SK-N-SH (cell line): ENCODE measurements at regions of chr6 and their contacts with region 1.

Region 1: DNA sequence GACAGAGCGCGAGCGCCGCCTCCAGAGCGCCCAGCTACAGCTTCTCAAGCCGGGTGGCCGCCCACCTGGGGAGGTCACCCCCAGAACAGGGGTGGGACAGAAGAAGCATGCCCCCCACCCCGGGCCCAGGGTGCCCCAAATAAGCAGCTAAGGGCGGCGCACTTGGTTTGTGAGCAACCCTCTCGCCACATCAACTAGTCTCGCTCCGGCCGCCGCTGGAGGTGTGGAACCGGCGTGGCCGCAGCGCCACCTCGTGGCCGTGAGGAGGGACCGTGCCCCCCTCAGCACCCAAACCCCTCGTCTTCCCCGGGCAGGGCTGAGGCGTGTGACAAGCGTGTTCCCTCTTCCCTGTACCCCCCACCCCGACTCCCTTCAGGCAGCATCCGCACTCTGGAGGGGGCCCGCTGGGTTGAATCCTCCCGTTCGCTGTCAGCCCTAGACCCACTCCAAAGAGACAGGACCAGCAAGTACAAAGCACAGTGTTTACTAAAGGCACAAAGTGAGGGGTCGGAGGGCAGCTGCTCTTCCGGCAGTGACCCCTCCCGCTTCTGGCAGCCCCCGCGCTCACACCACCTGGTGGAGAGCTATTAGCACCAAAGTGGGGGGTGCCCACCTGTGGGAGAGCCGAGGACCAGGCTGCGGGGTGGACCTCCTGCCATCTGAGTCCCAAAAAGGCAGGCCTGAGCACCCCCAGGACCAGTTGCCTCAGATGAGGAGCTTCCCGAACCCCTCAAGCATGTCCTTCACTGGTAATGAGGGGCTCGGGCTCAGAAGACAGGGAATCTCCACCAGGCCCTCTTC is 45.4 kb downstream of the MDFI start:
- DNase-seq: peak; percentile 96
- H3K4me3 ChIP-seq: peak overlapping the region in 1 of 2 experiments; percentile 35; a peak in 1 of 4 replicates
- H3K27ac ChIP-seq: no peak overlapping the region
- H3K4me1 ChIP-seq: peaks cover 11 to 14% of the 10 kb centered on the region in 2 experiments; a peak in 3 of 4 replicates
- H3K27me3 ChIP-seq: no peaks in the 10 kb centered on the region
- CTCF ChIP-seq: peak; percentile 89
- EP300 ChIP-seq: no peak
- RAD21 ChIP-seq: peak; percentile 91

Region 2: GRCh38 chr6:41424370-41425058 is 259.2 kb before region 1 on chr6:
- CTCF ChIA-PET with region 1: interaction called, 30 read pairs
- POLR2A ChIA-PET with region 1: no interaction called
- DNase-seq: peak; percentile 84
- H3K4me3 ChIP-seq: no peak overlapping the region
- H3K27ac ChIP-seq: no peak overlapping the region
- H3K4me1 ChIP-seq: peaks cover 0 to 17% of the 10 kb centered on the region in 2 experiments; a peak in 1 of 4 replicates
- H3K27me3 ChIP-seq: peaks cover 48% of the 10 kb centered on the region
- CTCF ChIP-seq: peak; percentile 85
- EP300 ChIP-seq: no peak
- RAD21 ChIP-seq: peak; percentile 76

Region 3: GRCh38 chr6:41581381-41581991 is 102.2 kb before region 1 on chr6:
- CTCF ChIA-PET with region 1: interaction called, 32 read pairs
- POLR2A ChIA-PET with region 1: no interaction called
- DNase-seq: peak; percentile 63
- H3K4me3 ChIP-seq: 0 out of 4 replicates have a peak overlapping the region, but pooled peaks of 1 of the 2 experiments have one; percentile 1
- H3K27ac ChIP-seq: peak overlapping the region; percentile 60 to 93
- H3K4me1 ChIP-seq: peaks cover 30 to 49% of the 10 kb centered on the region in 2 experiments; a peak in 3 of 4 replicates
- H3K27me3 ChIP-seq: no peaks in the 10 kb centered on the region
- CTCF ChIP-seq: no peak
- EP300 ChIP-seq: peak in 1 of 2 experiments; percentile 61; a peak in 1 of 4 replicates
- RAD21 ChIP-seq: no peak

Region 4: GRCh38 chr6:41625442-41625841 is 58.3 kb before region 1 on chr6:
- CTCF ChIA-PET with region 1: interaction called, 13 read pairs
- POLR2A ChIA-PET with region 1: no interaction called
- DNase-seq: no peak
- H3K4me3 ChIP-seq: no peak overlapping the region
- H3K27ac ChIP-seq: no peak overlapping the region
- H3K4me1 ChIP-seq: peaks cover 0 to 3% of the 10 kb centered on the region in 2 experiments; a peak in 2 of 4 replicates
- H3K27me3 ChIP-seq: no peaks in the 10 kb centered on the region
- CTCF ChIP-seq: no peak
- EP300 ChIP-seq: no peak
- RAD21 ChIP-seq: no peak

Region 5: DNA sequence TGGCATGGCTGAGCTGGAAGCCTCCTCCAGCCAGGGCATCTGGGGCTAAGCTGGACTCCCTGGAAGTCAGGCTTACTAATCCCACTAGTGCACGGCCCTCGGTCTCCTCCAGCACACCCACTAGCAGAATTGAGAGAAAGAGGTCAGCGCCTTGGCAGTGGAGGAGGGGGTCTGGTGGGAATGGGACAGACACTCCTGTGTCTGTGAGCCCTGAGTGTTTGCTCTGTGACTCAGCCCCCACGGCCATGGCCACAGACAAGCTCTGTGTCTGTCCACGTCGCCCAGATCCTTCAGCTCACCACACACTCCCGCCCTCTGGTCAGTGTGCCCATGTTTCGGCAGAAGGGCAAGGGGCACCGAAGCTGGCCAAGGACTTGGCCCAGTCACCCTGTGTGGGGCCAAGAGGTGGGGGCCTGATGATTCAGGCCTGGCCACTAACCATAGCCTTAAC is 36.6 kb before region 1 on chr6:
- CTCF ChIA-PET with region 1: interaction called, 18 read pairs
- POLR2A ChIA-PET with region 1: no interaction called
- DNase-seq: no peak
- H3K4me3 ChIP-seq: no peak overlapping the region
- H3K27ac ChIP-seq: no peak overlapping the region
- H3K4me1 ChIP-seq: peaks cover 4 to 15% of the 10 kb centered on the region in 2 experiments; a peak in 2 of 4 replicates
- H3K27me3 ChIP-seq: no peaks in the 10 kb centered on the region
- CTCF ChIP-seq: no peak
- EP300 ChIP-seq: no peak
- RAD21 ChIP-seq: no peak

Region 6: GRCh38 chr6:41700463-41701347 is 17.0 kb after region 1 on chr6:
- CTCF ChIA-PET with region 1: interaction called, 57 read pairs
- POLR2A ChIA-PET with region 1: no interaction called
- DNase-seq: no peak
- H3K4me3 ChIP-seq: no peak overlapping the region
- H3K27ac ChIP-seq: peak overlapping the region in 1 of 2 experiments; percentile 100; a peak in 1 of 4 replicates
- H3K4me1 ChIP-seq: peaks cover 21 to 35% of the 10 kb centered on the region in 2 experiments
- H3K27me3 ChIP-seq: no peaks in the 10 kb centered on the region
- CTCF ChIP-seq: no peak
- EP300 ChIP-seq: no peak
- RAD21 ChIP-seq: no peak

Region 7: DNA sequence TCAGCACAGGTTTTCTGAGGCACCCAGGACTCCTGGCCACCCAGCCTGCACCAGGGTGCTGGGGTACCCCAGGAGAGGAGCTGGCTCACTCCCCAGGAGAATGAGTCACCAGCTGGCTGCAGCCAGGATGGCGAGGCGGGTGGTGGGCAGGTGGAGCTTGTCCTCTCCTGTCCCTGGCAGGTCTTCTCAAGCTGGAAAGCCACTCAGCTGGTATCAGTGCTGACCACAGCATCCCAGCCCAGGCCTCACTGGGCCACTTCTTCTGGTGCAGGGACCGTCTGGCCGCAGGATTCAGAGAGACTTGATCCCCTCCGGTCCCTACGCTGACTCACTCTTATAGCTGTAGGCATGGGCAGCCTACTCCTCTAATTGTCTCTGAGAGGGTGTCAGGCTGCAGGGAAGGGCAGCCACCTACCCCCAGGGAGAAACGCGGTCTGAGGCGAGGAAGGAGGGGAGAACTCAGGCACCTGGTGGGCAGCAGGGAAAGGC is 29.5 kb after region 1 on chr6:
- CTCF ChIA-PET with region 1: interaction called, 16 read pairs
- POLR2A ChIA-PET with region 1: no interaction called
- DNase-seq: no peak
- H3K4me3 ChIP-seq: no peak overlapping the region
- H3K27ac ChIP-seq: peak overlapping the region; percentile 17 to 63; a peak in 3 of 4 replicates
- H3K4me1 ChIP-seq: peaks cover 30 to 53% of the 10 kb centered on the region in 2 experiments; a peak in 3 of 4 replicates
- H3K27me3 ChIP-seq: no peaks in the 10 kb centered on the region
- CTCF ChIP-seq: no peak
- EP300 ChIP-seq: peak in 1 of 2 experiments; percentile 64; a peak in 1 of 4 replicates
- RAD21 ChIP-seq: no peak

Region 8: DNA sequence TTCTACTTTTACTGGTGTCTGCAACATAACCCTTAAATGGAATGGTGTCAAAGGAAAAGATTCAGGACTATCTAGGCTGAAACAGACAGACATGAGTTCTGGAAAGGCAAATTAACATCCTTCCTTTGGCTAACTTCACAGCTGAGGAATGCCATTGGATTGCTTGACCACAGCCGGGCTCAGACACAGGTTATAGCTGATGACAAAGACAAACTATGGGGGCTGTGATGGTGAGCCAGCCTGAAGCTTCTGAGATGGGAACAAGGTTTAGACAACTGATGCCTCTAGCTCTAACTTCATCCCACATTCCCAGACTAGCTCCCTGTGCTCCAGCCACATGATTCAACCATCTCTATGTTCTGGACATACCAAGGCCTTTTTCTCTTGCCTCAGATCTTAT is 1848.5 kb after region 1 on chr6:
- CTCF ChIA-PET with region 1: no interaction called
- POLR2A ChIA-PET with region 1: no interaction called
- DNase-seq: no peak
- H3K4me3 ChIP-seq: no peak overlapping the region
- H3K27ac ChIP-seq: no peak overlapping the region
- H3K4me1 ChIP-seq: peaks cover 0 to 3% of the 10 kb centered on the region in 2 experiments; a peak in 1 of 4 replicates
- H3K27me3 ChIP-seq: no peaks in the 10 kb centered on the region
- CTCF ChIP-seq: no peak
- EP300 ChIP-seq: no peak
- RAD21 ChIP-seq: no peak